Activated CD8-positive, alpha-beta memory T cell treated with anti-CD3 and anti-CD28 coated beads, Interleukin-2, amount 10 ng/mL, durations not matched to agents 7 days and 5 days (primary cell): ENCODE measurements at regions of chr22 and their contacts with region 1.

Region 1: GRCh38 chr22:38766076-38766777 is 10.4 kb upstream of the SUN2 start:
- DNase-seq: no peak
- ATAC-seq: peak; percentile 56
- H3K4me3 Mint-ChIP-seq: no peak overlapping the region
- H3K27ac Mint-ChIP-seq: no peak overlapping the region
- H3K4me1 Mint-ChIP-seq: no peaks in the 10 kb centered on the region
- H3K27me3 Mint-ChIP-seq: no peaks in the 10 kb centered on the region

Region 2: GRCh38 chr22:38461414-38462081 is 304.7 kb before region 1 on chr22:
- CTCF ChIA-PET with region 1: no interaction called
- DNase-seq: peak; percentile 73
- ATAC-seq: peak; percentile 70
- H3K4me3 Mint-ChIP-seq: no peak overlapping the region
- H3K27ac Mint-ChIP-seq: no peak overlapping the region
- H3K4me1 Mint-ChIP-seq: peaks cover 6% of the 10 kb centered on the region
- H3K27me3 Mint-ChIP-seq: peaks cover 86% of the 10 kb centered on the region

Region 3: DNA sequence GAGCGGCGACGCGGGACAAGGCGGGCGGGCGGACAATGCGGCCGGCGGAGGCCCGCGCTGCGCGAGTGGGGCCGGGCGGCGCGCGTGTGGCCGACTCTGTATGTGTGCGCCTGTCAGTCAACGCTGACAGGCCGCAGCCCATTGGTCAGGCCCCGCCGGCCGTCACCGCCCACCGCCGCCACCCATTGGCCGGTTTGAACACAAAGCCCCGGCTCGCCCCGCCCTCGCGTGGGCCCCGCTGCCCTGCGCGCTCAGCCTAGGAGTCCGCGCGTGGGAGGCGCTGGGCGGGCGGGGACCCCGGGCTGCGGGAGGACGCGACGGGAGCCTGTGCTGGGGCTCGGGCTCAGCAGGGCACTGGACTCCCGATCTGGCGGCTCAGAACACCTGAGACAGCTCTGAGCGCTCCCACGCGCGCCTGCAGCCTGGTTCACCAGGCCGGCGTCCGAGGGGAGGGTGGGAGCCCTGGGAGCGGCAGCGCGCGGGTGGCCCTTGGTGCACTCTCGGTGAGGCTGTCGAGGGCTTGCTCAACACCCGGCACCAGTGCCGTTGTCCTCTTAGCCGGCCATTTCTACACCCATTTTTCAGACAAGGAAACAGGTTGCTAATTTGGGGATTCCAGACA is 10.2 kb before region 1 on chr22 and contains the start of gene SUN2:
- CTCF ChIA-PET with region 1: interaction called, 31 read pairs
- DNase-seq: peak; percentile 96
- ATAC-seq: peak; percentile 79
- H3K4me3 Mint-ChIP-seq: peak within 1 kb of the TSS; percentile 92
- H3K27ac Mint-ChIP-seq: peak within 1 kb of the TSS; percentile 99
- H3K4me1 Mint-ChIP-seq: peaks cover 45% of the 10 kb centered on the region
- H3K27me3 Mint-ChIP-seq: no peaks in the 10 kb centered on the region
- total RNA-seq, gene SUN2: 320 to 412 TPM

Region 4: DNA sequence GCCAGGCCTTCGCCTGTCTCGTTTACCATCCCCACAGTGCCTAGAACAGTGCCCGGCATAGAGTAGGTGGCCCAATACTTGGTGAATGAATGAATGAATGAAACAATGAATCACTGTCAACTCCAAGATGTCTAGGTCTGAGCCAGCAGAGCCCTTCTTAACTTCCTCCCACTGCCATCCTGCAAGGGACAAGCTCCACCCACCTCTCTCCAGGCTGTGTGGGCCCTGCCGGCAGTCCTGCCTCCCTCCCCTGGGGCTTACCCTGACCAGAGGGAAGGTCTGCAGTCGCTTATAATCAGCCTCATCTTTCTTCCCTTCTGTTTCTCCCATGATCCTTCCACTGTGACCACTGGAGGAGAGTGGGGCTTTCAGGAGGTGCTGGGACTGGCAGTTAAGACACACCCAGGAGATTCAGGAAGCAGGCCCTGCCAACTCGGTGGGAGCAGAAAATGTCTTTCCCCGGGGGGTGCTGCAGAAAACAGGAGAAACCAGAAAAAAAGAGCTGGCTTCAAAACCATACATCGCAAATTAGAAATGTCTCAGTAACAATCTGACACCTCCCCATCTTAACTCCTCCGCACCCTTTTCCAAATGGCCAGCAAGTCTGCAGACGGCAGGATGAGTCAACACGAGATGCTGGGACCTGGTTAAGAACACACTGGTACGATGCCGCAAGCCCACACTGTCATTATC is 16.3 kb after region 1 on chr22:
- CTCF ChIA-PET with region 1: interaction called, 18 read pairs
- DNase-seq: no peak
- ATAC-seq: no peak
- H3K4me3 Mint-ChIP-seq: no peak overlapping the region
- H3K27ac Mint-ChIP-seq: no peak overlapping the region
- H3K4me1 Mint-ChIP-seq: no peaks in the 10 kb centered on the region
- H3K27me3 Mint-ChIP-seq: no peaks in the 10 kb centered on the region

Region 5: GRCh38 chr22:38843201-38843715 is 77.0 kb after region 1 on chr22:
- CTCF ChIA-PET with region 1: interaction called, 29 read pairs
- DNase-seq: peak; percentile 67
- ATAC-seq: peak; percentile 90
- H3K4me3 Mint-ChIP-seq: no peak overlapping the region
- H3K27ac Mint-ChIP-seq: no peak overlapping the region
- H3K4me1 Mint-ChIP-seq: peaks cover 10% of the 10 kb centered on the region
- H3K27me3 Mint-ChIP-seq: peaks cover 62% of the 10 kb centered on the region